Naive thymus-derived CD4-positive, alpha-beta T cell (primary cell): ENCODE measurements at regions of chr7 and their contacts with region 1.

Region 1: GRCh38 chr7:100586266-100587025 is at the start of gene FBXO24:
- DNase-seq: peak; percentile 91 to 100 (median 99)
- ATAC-seq: peak; percentile 91
- H3K4me3 ChIP-seq: peak within 1 kb of the TSS; percentile 94
- H3K4me3 Mint-ChIP-seq: peak within 1 kb of the TSS; percentile 95 to 100 (median 99)
- H3K27ac ChIP-seq: peak within 1 kb of the TSS; percentile 90
- H3K27ac Mint-ChIP-seq: peak within 1 kb of the TSS in 8 of 9 donors; percentile 94 to 99 (median 98)
- H3K4me1 ChIP-seq: peaks cover 22 to 28% of the 10 kb centered on the region in 2 donors
- H3K4me1 Mint-ChIP-seq: peaks cover 20 to 42% (median 30%) of the 10 kb centered on the region in 7 donors
- H3K27me3 ChIP-seq: no peaks in the 10 kb centered on the region
- H3K27me3 Mint-ChIP-seq: peaks cover 0 to 22% (median 4%) of the 10 kb centered on the region in 5 donors
- total RNA-seq, gene FBXO24: 0.75 to 3.1 (median 1.7) TPM

Region 2: DNA sequence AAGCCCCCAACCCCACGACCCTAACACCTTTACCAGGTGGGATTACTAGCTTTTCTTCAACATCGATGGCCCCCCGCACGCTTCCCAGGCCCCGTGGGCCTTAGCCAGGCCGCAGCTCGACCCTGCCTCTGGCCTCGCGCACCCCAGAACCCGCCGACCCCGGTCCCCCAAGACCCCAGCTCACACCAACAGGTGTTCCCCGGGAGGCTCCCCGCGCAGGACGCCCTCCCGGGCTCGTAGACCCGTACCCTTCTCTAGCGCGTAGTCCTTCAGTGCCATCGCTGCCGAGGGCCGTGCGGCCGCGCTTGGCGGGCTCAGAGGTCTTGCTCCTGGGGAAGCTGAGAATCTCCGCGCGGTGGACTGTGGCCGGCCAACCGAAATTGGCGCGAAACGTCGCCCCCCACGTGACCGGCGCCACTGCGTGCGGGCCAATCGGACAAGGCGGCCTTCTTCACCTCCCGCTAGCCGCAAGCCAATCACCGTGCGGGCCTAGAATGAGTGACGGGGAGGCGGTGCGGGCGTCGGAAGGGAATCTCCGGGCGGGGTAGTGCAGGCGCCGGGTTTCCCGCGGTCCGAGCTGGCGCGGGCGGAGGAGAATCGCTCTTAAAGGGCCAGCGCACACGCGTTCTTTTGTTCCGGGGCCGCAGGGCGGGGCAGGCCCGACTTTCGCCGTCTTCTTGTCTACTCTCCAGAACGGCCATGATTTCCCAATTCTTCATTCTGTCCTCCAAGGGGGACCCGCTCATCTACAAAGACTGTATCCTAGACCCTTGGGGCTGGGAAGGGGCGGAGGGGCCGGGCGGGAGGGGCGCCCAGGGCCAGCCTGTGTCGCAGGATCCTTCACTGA is 485.2 kb before region 1 on chr7 and contains the starts of genes AP4M1 and MCM7:
- CTCF ChIA-PET with region 1: no interaction called
- POLR2A ChIA-PET with region 1: no interaction called
- intact Hi-C with region 1: loop called in 1 of 2 experiments (anchors 10 kb)
- DNase-seq: peak; percentile 84 to 98 (median 93)
- ATAC-seq: peak; percentile 90
- H3K4me3 ChIP-seq: peak within 1 kb of the TSS; percentile 98
- H3K4me3 Mint-ChIP-seq: peak within 1 kb of the TSS; percentile 85 to 95 (median 93)
- H3K27ac ChIP-seq: peak within 1 kb of the TSS; percentile 91
- H3K27ac Mint-ChIP-seq: peak within 1 kb of the TSS; percentile 90 to 98 (median 96)
- H3K4me1 ChIP-seq: peaks cover 17 to 25% of the 10 kb centered on the region in 2 donors
- H3K4me1 Mint-ChIP-seq: peaks cover 27 to 47% (median 41%) of the 10 kb centered on the region in 7 donors
- H3K27me3 ChIP-seq: no peaks in the 10 kb centered on the region
- H3K27me3 Mint-ChIP-seq: no peaks in the 10 kb centered on the region
- total RNA-seq, gene AP4M1: 7.5 to 13.8 (median 11.0) TPM
- total RNA-seq, gene MCM7: 80.3 to 263 (median 168) TPM

Region 3: GRCh38 chr7:100503345-100503725 is 83.1 kb before region 1 on chr7:
- CTCF ChIA-PET with region 1: no interaction called
- POLR2A ChIA-PET with region 1: no interaction called
- intact Hi-C with region 1: no loop called
- DNase-seq: no peak
- ATAC-seq: no peak
- H3K4me3 ChIP-seq: no peak overlapping the region
- H3K4me3 Mint-ChIP-seq: no peak overlapping the region
- H3K27ac ChIP-seq: no peak overlapping the region
- H3K27ac Mint-ChIP-seq: no peak overlapping the region
- H3K4me1 ChIP-seq: no peaks in the 10 kb centered on the region
- H3K4me1 Mint-ChIP-seq: no peaks in the 10 kb centered on the region
- H3K27me3 ChIP-seq: no peaks in the 10 kb centered on the region
- H3K27me3 Mint-ChIP-seq: peaks cover 0 to 3% (median 0%) of the 10 kb centered on the region in 5 donors

Region 4: GRCh38 chr7:100538654-100539435 is 47.6 kb before region 1 on chr7 and contains the start of gene AGFG2:
- CTCF ChIA-PET with region 1: no interaction called
- POLR2A ChIA-PET with region 1: interaction called, 13 read pairs
- intact Hi-C with region 1: loop called (anchors 1 kb)
- DNase-seq: peak; percentile 98 to 100 (median 100)
- ATAC-seq: peak; percentile 99
- H3K4me3 ChIP-seq: peak within 1 kb of the TSS; percentile 73
- H3K4me3 Mint-ChIP-seq: peak within 1 kb of the TSS; percentile 85 to 100 (median 96)
- H3K27ac ChIP-seq: peak within 1 kb of the TSS; percentile 64
- H3K27ac Mint-ChIP-seq: peak within 1 kb of the TSS; percentile 82 to 97 (median 90)
- H3K4me1 ChIP-seq: peaks cover 30 to 39% of the 10 kb centered on the region in 2 donors
- H3K4me1 Mint-ChIP-seq: peaks cover 26 to 53% (median 48%) of the 10 kb centered on the region in 7 donors
- H3K27me3 ChIP-seq: no peaks in the 10 kb centered on the region
- H3K27me3 Mint-ChIP-seq: peaks cover 0 to 2% (median 0%) of the 10 kb centered on the region in 5 donors
- total RNA-seq, gene AGFG2: 15.8 to 42.4 (median 23.3) TPM

Region 5: DNA sequence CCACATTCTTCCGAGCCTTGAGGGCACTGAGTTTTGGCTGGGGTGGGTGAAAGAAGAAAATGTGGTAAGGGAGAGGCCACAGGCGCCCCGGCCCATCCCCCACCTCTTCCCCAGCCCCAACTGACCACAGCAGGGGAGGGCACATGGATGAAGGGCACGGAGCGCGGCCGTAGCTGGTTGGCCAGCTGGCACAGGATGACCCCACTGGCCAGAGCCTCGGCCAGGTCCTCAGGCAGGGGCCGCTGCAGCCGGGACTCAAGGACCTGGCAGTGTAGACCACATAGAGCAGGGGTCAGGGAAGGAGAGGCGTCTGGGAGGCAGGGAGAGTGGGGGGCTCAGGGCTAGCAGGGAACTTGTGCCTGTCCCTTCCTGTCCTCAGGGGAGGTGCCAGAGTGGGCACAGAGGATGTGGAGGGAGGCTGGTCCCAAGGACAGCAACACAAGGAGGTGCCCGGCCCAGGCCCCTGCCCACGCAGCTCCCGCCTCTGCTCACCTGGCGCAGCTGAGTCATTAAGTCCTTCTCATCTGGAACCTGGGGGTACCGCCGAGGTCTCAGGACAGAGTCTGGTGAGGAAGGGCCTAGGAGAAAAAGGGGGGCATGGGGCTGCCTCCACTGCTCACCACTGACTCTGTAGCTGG is 10.6 kb before region 1 on chr7:
- CTCF ChIA-PET with region 1: interaction called, 8 read pairs
- POLR2A ChIA-PET with region 1: interaction called, 70 read pairs
- intact Hi-C with region 1: no loop called
- DNase-seq: no peak
- ATAC-seq: no peak
- H3K4me3 ChIP-seq: no peak overlapping the region
- H3K4me3 Mint-ChIP-seq: no peak overlapping the region
- H3K27ac ChIP-seq: no peak overlapping the region
- H3K27ac Mint-ChIP-seq: peak overlapping the region in 1 of 9 donors; percentile 59
- H3K4me1 ChIP-seq: peaks cover 3 to 4% of the 10 kb centered on the region in 2 donors
- H3K4me1 Mint-ChIP-seq: peaks cover 0 to 17% (median 8%) of the 10 kb centered on the region in 7 donors
- H3K27me3 ChIP-seq: no peaks in the 10 kb centered on the region
- H3K27me3 Mint-ChIP-seq: peaks cover 0 to 2% (median 0%) of the 10 kb centered on the region in 5 donors

Region 6: DNA sequence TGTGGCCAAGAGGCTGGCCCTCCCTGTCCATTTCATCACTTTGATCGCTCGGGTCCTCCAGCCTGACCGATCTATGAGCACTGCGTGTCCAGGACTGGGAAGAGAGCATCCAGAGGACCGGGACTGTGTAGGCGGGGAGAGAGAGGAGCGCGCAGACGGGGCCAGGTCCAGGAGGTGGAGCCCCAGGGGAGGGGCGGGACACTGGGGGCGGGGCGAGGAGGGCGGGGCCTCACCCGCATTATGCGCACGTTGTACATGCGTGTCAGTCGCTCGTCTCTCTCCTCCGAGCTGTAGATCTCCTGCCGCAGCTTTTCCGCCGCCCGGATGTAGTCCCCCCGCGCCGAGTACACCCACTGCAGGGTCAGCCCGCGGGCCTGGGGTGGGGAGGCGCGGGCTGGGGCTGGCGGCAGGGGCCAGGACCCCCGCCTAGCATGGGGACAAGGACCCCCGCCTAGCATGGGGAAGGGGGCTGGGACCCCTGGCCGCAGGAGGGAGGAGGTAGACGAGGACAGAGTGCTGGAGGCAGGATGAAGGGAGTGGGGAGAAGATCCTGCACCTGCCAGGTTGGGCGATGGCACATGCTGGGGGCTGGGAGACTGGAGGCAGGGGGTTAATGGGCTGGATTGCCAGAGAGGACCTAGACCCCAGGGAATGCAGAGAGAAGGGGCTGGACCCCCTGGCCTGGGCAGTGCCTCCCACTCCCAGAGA is 40.2 kb after region 1 on chr7:
- CTCF ChIA-PET with region 1: interaction called, 3 read pairs
- POLR2A ChIA-PET with region 1: interaction called, 11 read pairs
- intact Hi-C with region 1: loop called (anchors 1 kb)
- DNase-seq: peak; percentile 56 to 88 (median 81)
- ATAC-seq: peak; percentile 99
- H3K4me3 ChIP-seq: peak overlapping the region; percentile 58
- H3K4me3 Mint-ChIP-seq: peak overlapping the region; percentile 60 to 87 (median 76)
- H3K27ac ChIP-seq: peak overlapping the region; percentile 84
- H3K27ac Mint-ChIP-seq: peak overlapping the region; percentile 49 to 88 (median 75)
- H3K4me1 ChIP-seq: peaks cover 14 to 18% of the 10 kb centered on the region in 2 donors
- H3K4me1 Mint-ChIP-seq: peaks cover 26 to 58% (median 43%) of the 10 kb centered on the region in 7 donors
- H3K27me3 ChIP-seq: peaks cover 0 to 4% of the 10 kb centered on the region in 2 donors
- H3K27me3 Mint-ChIP-seq: no peaks in the 10 kb centered on the region

Region 7: GRCh38 chr7:100691676-100692577 is 105.5 kb after region 1 on chr7:
- CTCF ChIA-PET with region 1: interaction called, 7 read pairs
- POLR2A ChIA-PET with region 1: interaction called, 9 read pairs
- intact Hi-C with region 1: loop called (anchors 1 kb)
- DNase-seq: peak; percentile 64 to 85 (median 78)
- ATAC-seq: peak; percentile 79
- H3K4me3 ChIP-seq: peak overlapping the region; percentile 67
- H3K4me3 Mint-ChIP-seq: peak overlapping the region; percentile 92 to 100 (median 94)
- H3K27ac ChIP-seq: peak overlapping the region; percentile 73
- H3K27ac Mint-ChIP-seq: peak overlapping the region; percentile 62 to 96 (median 95)
- H3K4me1 ChIP-seq: peaks cover 23 to 27% of the 10 kb centered on the region in 2 donors
- H3K4me1 Mint-ChIP-seq: peaks cover 29 to 54% (median 41%) of the 10 kb centered on the region in 7 donors
- H3K27me3 ChIP-seq: no peaks in the 10 kb centered on the region
- H3K27me3 Mint-ChIP-seq: peaks cover 0 to 16% (median 0%) of the 10 kb centered on the region in 5 donors